Mammary epithelial cell (primary cell): ENCODE measurements at regions of chr4 and their contacts with region 1.

Region 1: GRCh38 chr4:13907255-13907751 is 279.8 kb upstream of the BOD1L1 start:
- DNase-seq: peak; percentile 97
- H3K4me3 ChIP-seq: no peak overlapping the region
- H3K27ac ChIP-seq: peak overlapping the region; percentile 86
- H3K4me1 ChIP-seq: peaks cover 30% of the 10 kb centered on the region
- H3K27me3 ChIP-seq: no peaks in the 10 kb centered on the region
- CTCF ChIP-seq: peak; percentile 18 to 38

Region 2: DNA sequence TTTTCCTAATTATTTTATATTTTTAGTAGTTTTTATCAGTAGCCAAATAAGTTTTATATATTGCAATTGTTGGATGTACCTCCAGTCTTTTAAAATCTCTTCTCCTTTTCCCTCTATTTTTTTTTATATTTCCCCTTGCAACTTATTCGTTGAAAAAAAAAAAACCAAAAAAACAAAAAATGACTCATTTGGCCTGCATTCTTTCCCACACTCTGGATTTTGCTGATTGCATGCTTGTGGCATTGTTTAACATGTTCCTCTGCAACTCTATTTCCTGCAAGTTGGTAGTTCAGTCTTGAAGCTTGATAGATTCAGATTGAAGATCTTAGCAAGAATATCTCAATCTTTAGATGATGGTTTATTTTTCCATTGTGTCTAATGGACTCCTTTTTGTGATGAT is 19.2 kb before region 1 on chr4:
- CTCF ChIA-PET with region 1: no interaction called
- dilution Hi-C with region 1: no loop called
- in situ Hi-C with region 1: no loop called
- intact Hi-C with region 1: loop called (anchors 1 kb)
- DNase-seq: peak; percentile 76
- H3K4me3 ChIP-seq: no peak overlapping the region
- H3K27ac ChIP-seq: no peak overlapping the region
- H3K4me1 ChIP-seq: peaks cover 27% of the 10 kb centered on the region
- H3K27me3 ChIP-seq: no peaks in the 10 kb centered on the region
- CTCF ChIP-seq: no peak

Region 3: GRCh38 chr4:13988353-13989305 is 81.3 kb after region 1 on chr4:
- CTCF ChIA-PET with region 1: no interaction called
- dilution Hi-C with region 1: no loop called
- in situ Hi-C with region 1: no loop called
- intact Hi-C with region 1: loop called (anchors 1 kb)
- DNase-seq: peak; percentile 94
- H3K4me3 ChIP-seq: no peak overlapping the region
- H3K27ac ChIP-seq: peak overlapping the region; percentile 79
- H3K4me1 ChIP-seq: peaks cover 36% of the 10 kb centered on the region
- H3K27me3 ChIP-seq: peaks cover 3% of the 10 kb centered on the region
- CTCF ChIP-seq: no peak

Region 4: GRCh38 chr4:14254252-14254651 is 346.9 kb after region 1 on chr4:
- CTCF ChIA-PET with region 1: no interaction called
- dilution Hi-C with region 1: no loop called
- in situ Hi-C with region 1: no loop called
- intact Hi-C with region 1: loop called (anchors 1 kb)
- DNase-seq: peak; percentile 46
- H3K4me3 ChIP-seq: no peak overlapping the region
- H3K27ac ChIP-seq: no peak overlapping the region
- H3K4me1 ChIP-seq: no peaks in the 10 kb centered on the region
- H3K27me3 ChIP-seq: no peaks in the 10 kb centered on the region
- CTCF ChIP-seq: peak; percentile 78 to 93

Region 5: GRCh38 chr4:14446311-14446710 is 539.0 kb after region 1 on chr4:
- CTCF ChIA-PET with region 1: no interaction called
- dilution Hi-C with region 1: no loop called
- in situ Hi-C with region 1: no loop called
- intact Hi-C with region 1: no loop called
- DNase-seq: peak; percentile 91
- H3K4me3 ChIP-seq: peak overlapping the region in 1 of 3 experiments; percentile 14
- H3K27ac ChIP-seq: peak overlapping the region; percentile 86
- H3K4me1 ChIP-seq: peaks cover 20% of the 10 kb centered on the region
- H3K27me3 ChIP-seq: no peaks in the 10 kb centered on the region
- CTCF ChIP-seq: no peak

Region 6: GRCh38 chr4:14667624-14668151 is 760.4 kb after region 1 on chr4:
- CTCF ChIA-PET with region 1: no interaction called
- dilution Hi-C with region 1: no loop called
- in situ Hi-C with region 1: no loop called
- intact Hi-C with region 1: no loop called
- DNase-seq: peak; percentile 51
- H3K4me3 ChIP-seq: no peak overlapping the region
- H3K27ac ChIP-seq: no peak overlapping the region
- H3K4me1 ChIP-seq: no peaks in the 10 kb centered on the region
- H3K27me3 ChIP-seq: peaks cover under 1% of the 10 kb centered on the region
- CTCF ChIP-seq: no peak

Region 7: DNA sequence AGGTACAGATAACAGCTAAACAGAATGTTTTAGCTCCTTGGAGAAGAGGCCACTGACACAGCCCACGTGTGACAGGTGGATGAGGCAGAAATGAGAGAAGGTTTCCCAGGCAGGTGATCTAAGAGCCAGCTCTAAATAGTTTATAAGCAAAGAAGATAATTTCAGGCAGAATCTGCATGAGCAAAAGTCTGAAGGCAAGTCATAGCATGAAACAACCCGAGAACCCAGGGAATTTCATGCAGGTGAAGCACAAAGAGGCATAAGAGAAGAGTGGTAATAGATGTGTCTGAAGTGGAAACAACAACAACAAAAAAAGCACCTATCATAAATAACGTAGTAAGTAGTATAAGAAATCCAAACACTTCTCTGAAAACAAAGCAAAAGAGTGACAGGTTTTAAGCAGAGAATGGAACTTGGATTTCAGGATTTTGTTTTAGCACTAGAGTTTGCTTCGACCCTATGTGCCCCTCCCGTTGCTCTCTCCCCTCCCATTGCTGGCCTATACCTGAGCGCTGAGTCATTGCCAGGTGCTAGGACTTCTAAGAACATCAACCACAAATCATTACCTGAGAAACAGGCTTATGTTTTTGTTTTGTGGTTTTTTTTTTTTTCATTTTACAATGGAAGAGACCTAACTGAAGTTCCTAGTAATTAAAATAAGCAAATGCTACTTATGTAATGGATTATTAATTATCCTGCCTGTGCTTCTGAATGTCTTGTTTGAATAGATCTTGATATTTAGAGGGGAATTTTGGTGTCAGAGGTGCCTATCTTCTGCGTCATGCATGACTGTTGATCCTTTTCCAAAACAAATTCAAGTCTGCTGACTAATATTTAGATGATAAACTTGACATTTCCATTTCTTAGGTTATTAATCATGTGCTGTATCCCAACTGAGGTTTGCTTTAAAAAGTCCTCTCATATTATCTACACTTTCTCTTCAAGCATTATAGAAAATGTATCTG is 819.4 kb after region 1 on chr4:
- CTCF ChIA-PET with region 1: no interaction called
- dilution Hi-C with region 1: no loop called
- in situ Hi-C with region 1: no loop called
- intact Hi-C with region 1: loop called (anchors 10 kb)
- DNase-seq: peak; percentile 95
- H3K4me3 ChIP-seq: peak overlapping the region in 1 of 3 experiments; percentile 0
- H3K27ac ChIP-seq: peak overlapping the region; percentile 94
- H3K4me1 ChIP-seq: peaks cover 12% of the 10 kb centered on the region
- H3K27me3 ChIP-seq: no peaks in the 10 kb centered on the region
- CTCF ChIP-seq: no peak